B cell (primary cell): ENCODE measurements at regions of chr9 and their contacts with region 1.

Region 1: GRCh38 chr9:11577522-11577921 is 964.7 kb upstream of the PTPRD start:
- DNase-seq: no peak
- ATAC-seq: no peak
- H3K4me3 ChIP-seq: no peak overlapping the region
- H3K4me3 Mint-ChIP-seq: no peak overlapping the region
- H3K27ac ChIP-seq: no peak overlapping the region
- H3K27ac Mint-ChIP-seq: no peak overlapping the region
- H3K4me1 ChIP-seq: no peaks in the 10 kb centered on the region
- H3K4me1 Mint-ChIP-seq: no peaks in the 10 kb centered on the region
- H3K27me3 ChIP-seq: no peaks in the 10 kb centered on the region
- H3K27me3 Mint-ChIP-seq: no peaks in the 10 kb centered on the region
- CTCF ChIP-seq: no peak

Region 2: DNA sequence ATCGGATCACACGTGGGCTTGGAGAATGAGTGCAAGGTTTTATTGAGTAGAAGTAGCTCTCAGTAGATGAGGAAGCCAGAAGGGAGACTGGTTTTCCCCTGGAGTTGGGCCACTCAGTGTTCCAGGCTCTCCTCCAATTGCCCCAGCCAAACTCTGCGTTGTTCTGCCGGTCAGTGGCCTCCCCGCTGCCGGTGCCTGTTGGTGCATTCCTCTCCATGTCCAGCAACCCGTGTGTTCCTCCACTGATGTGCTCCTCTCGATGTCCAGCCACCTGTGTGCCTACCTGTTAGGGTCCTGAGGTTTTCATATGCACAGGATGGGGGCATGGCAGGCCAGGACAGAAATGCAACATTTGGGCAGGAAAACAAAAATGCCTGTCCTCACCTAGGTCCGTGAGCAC is 76.7 kb before region 1 on chr9:
- CTCF ChIA-PET with region 1: no interaction called
- POLR2A ChIA-PET with region 1: no interaction called
- intact Hi-C with region 1: loop called (anchors 2 kb)
- DNase-seq: no peak
- ATAC-seq: no peak
- H3K4me3 ChIP-seq: no peak overlapping the region
- H3K4me3 Mint-ChIP-seq: no peak overlapping the region
- H3K27ac ChIP-seq: no peak overlapping the region
- H3K27ac Mint-ChIP-seq: no peak overlapping the region
- H3K4me1 ChIP-seq: no peaks in the 10 kb centered on the region
- H3K4me1 Mint-ChIP-seq: no peaks in the 10 kb centered on the region
- H3K27me3 ChIP-seq: no peaks in the 10 kb centered on the region
- H3K27me3 Mint-ChIP-seq: no peaks in the 10 kb centered on the region
- CTCF ChIP-seq: no peak

Region 3: DNA sequence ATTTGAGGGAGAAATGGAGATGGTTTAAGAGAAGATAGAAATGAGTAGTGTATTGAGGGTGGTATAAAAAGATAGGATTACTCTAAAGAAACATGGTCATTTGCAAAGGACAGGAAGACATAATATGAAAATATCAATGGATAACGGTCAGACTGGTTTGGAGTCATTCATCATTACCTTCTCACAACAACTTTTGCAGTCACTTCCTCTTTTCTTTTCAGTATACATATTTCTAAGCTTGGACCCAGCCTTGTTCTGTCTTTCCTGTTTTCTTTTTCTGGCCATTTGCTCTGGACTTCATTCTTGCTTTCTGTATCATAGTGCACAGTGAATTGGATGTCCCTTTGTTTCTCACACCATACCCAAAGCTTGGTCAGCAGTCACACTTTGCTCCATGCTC is 149.1 kb after region 1 on chr9:
- CTCF ChIA-PET with region 1: no interaction called
- POLR2A ChIA-PET with region 1: no interaction called
- intact Hi-C with region 1: no loop called
- DNase-seq: no peak
- ATAC-seq: no peak
- H3K4me3 ChIP-seq: no peak overlapping the region
- H3K4me3 Mint-ChIP-seq: no peak overlapping the region
- H3K27ac ChIP-seq: no peak overlapping the region
- H3K27ac Mint-ChIP-seq: no peak overlapping the region
- H3K4me1 ChIP-seq: no peaks in the 10 kb centered on the region
- H3K4me1 Mint-ChIP-seq: no peaks in the 10 kb centered on the region
- H3K27me3 ChIP-seq: no peaks in the 10 kb centered on the region
- H3K27me3 Mint-ChIP-seq: no peaks in the 10 kb centered on the region
- CTCF ChIP-seq: no peak

Region 4: GRCh38 chr9:11779971-11780370 is 202.4 kb after region 1 on chr9:
- CTCF ChIA-PET with region 1: no interaction called
- POLR2A ChIA-PET with region 1: no interaction called
- intact Hi-C with region 1: no loop called
- DNase-seq: no peak
- ATAC-seq: no peak
- H3K4me3 ChIP-seq: no peak overlapping the region
- H3K4me3 Mint-ChIP-seq: no peak overlapping the region
- H3K27ac ChIP-seq: no peak overlapping the region
- H3K27ac Mint-ChIP-seq: no peak overlapping the region
- H3K4me1 ChIP-seq: no peaks in the 10 kb centered on the region
- H3K4me1 Mint-ChIP-seq: no peaks in the 10 kb centered on the region
- H3K27me3 ChIP-seq: no peaks in the 10 kb centered on the region
- H3K27me3 Mint-ChIP-seq: no peaks in the 10 kb centered on the region
- CTCF ChIP-seq: no peak